Activated CD4-positive, alpha-beta memory T cell treated with anti-CD3 and anti-CD28 coated beads for 36 hours (primary cell): ENCODE measurements at regions of chr1 and their contacts with region 1.

Region 1: GRCh38 chr1:9128520-9129265 is at the start of gene GPR157:
- DNase-seq: peak; percentile 86
- H3K4me3 Mint-ChIP-seq: peak within 1 kb of the TSS; percentile 86
- H3K27ac Mint-ChIP-seq: peak within 1 kb of the TSS; percentile 28
- H3K4me1 Mint-ChIP-seq: peaks cover 45% of the 10 kb centered on the region
- H3K27me3 Mint-ChIP-seq: no peaks in the 10 kb centered on the region
- total RNA-seq, gene GPR157: 3.5 to 3.9 TPM

Region 2: GRCh38 chr1:8817406-8818324 is 311.0 kb before region 1 on chr1 and contains the start of gene RERE:
- CTCF ChIA-PET with region 1: no interaction called
- POLR2A ChIA-PET with region 1: no interaction called
- intact Hi-C with region 1: loop called (anchors 5 kb)
- DNase-seq: peak; percentile 97
- H3K4me3 Mint-ChIP-seq: peak within 1 kb of the TSS; percentile 86
- H3K27ac Mint-ChIP-seq: peak within 1 kb of the TSS; percentile 91
- H3K4me1 Mint-ChIP-seq: peaks cover 46% of the 10 kb centered on the region
- H3K27me3 Mint-ChIP-seq: peaks cover 4% of the 10 kb centered on the region
- total RNA-seq, gene RERE: 45.0 to 50.5 TPM

Region 3: DNA sequence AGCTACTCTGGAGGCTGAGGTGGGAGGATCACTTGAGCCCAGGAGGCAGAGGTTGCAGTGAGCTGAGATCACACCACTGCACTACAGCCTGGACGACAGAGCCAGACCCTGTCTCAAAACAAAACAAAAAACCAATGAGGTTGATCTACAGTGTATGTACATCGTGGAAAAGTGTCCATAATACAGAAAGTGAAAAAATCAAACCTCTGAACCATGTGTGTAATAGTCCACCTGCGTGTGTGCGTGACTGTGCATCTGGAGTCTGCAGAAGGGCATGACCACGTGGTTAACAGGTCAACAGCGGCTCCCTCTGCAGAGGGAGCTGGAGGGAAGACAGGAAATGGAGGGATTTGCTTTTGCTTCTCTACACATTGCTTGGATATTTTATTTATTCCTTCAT is 217.8 kb before region 1 on chr1:
- CTCF ChIA-PET with region 1: no interaction called
- POLR2A ChIA-PET with region 1: no interaction called
- intact Hi-C with region 1: no loop called
- DNase-seq: no peak
- H3K4me3 Mint-ChIP-seq: no peak overlapping the region
- H3K27ac Mint-ChIP-seq: no peak overlapping the region
- H3K4me1 Mint-ChIP-seq: peaks cover 3% of the 10 kb centered on the region
- H3K27me3 Mint-ChIP-seq: peaks cover 3% of the 10 kb centered on the region

Region 4: DNA sequence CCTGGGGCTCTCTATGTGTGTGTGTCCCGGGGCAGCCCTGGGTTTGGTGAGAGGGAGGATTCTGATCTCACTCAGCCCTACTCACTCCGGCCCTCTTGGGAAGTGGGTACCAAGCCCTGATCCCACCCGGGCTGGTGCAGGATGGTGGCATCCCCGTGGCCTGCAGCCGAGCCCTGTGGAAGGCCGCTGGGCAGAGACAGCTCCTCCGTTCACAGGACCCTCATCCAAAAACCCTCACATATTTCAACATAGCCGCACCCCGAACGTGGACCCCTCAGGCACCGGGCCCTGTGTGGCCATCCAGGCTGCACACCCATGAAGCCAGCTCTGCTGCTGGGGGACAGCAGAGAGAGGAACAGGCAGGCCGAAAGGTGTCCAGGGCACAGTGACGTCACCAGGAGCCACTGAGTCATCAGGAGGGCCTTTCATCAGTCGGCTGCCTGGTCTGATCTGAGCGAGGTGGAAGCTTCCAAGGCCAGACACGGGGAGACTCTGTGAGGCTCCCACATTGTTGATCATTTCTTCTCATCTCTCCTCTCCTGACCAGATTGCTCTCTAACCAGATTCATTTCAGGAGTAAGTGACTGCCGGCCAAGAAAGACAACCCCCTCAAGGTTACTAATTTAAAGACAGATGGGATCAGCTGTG is 16.5 kb after region 1 on chr1:
- CTCF ChIA-PET with region 1: interaction called, 11 read pairs
- POLR2A ChIA-PET with region 1: no interaction called
- intact Hi-C with region 1: no loop called
- DNase-seq: peak; percentile 68
- H3K4me3 Mint-ChIP-seq: no peak overlapping the region
- H3K27ac Mint-ChIP-seq: no peak overlapping the region
- H3K4me1 Mint-ChIP-seq: peaks cover 4% of the 10 kb centered on the region
- H3K27me3 Mint-ChIP-seq: no peaks in the 10 kb centered on the region

Region 5: DNA sequence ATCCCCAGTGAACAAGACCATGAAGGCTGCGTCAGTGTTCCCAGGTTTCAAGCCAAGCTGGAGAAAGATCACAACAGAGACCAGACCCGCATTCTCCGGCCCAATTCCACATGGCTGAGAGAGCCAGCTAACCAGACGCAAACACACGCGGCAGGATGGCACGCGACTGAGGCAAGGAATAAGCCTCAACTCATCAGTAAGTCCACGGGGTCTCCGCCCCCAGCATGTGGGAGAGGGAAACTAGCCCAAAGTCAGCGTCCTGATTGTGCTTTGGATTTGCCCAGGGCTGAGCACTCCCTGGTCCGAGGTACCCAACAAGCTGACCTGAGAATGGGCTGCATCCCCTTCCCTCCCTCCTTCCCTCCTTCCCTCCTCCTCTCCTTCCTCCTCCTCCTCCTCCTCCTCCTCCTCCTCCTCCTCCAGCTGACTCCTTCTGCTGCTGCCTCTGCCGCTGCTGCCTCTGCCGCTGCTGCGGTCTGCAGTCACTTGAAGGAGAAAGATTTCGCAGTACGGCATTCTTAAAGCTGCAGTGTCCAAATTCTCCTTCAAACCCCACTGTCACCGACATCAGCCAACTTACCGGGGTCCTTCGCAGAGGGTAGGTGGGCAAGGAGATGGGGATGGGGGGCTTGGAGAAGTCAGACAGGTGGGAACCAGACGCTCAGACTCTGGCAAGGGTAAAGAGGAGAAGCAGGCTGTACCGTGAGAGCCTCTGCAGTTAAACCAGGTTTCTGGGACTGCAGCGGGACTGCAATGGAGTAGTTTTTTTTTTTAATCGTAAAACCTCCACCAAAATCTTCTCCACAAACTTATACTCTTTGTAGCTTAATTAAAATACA is 72.9 kb after region 1 on chr1:
- CTCF ChIA-PET with region 1: no interaction called
- POLR2A ChIA-PET with region 1: no interaction called
- intact Hi-C with region 1: loop called (anchors 5 kb)
- DNase-seq: no peak
- H3K4me3 Mint-ChIP-seq: no peak overlapping the region
- H3K27ac Mint-ChIP-seq: no peak overlapping the region
- H3K4me1 Mint-ChIP-seq: peaks cover 34% of the 10 kb centered on the region
- H3K27me3 Mint-ChIP-seq: peaks cover 83% of the 10 kb centered on the region

Region 6: GRCh38 chr1:9388335-9389180 is 259.9 kb after region 1 on chr1:
- CTCF ChIA-PET with region 1: no interaction called
- POLR2A ChIA-PET with region 1: no interaction called
- intact Hi-C with region 1: no loop called
- DNase-seq: no peak
- H3K4me3 Mint-ChIP-seq: no peak overlapping the region
- H3K27ac Mint-ChIP-seq: no peak overlapping the region
- H3K4me1 Mint-ChIP-seq: peaks cover 15% of the 10 kb centered on the region
- H3K27me3 Mint-ChIP-seq: no peaks in the 10 kb centered on the region

Region 7: DNA sequence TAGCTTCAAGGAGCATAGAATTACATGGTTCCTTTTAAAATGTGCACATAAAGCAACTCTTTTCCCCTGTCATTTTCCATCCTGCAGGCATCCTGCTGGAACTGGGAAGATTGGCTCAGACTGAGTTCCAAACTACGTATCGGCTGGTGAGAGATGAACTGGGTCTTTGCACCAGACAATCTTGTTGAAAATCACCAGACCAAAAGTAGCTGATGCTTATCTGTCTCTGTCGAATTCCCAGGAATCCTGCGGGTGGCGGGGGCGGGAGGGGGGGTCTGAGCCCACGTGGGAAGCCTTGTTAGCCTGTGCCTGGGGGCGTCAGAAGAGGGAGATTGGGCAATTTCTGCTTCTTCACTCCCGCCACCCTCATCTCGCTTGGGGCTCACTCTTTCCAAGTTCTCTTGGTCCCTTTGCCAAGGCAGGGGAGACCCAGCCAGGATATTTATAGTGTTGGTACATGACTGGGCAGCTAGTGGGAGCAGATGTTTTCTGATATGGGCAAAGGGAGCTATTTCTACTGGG is 320.5 kb after region 1 on chr1:
- CTCF ChIA-PET with region 1: no interaction called
- POLR2A ChIA-PET with region 1: no interaction called
- intact Hi-C with region 1: no loop called
- DNase-seq: no peak
- H3K4me3 Mint-ChIP-seq: no peak overlapping the region
- H3K27ac Mint-ChIP-seq: no peak overlapping the region
- H3K4me1 Mint-ChIP-seq: no peaks in the 10 kb centered on the region
- H3K27me3 Mint-ChIP-seq: no peaks in the 10 kb centered on the region

Region 8: DNA sequence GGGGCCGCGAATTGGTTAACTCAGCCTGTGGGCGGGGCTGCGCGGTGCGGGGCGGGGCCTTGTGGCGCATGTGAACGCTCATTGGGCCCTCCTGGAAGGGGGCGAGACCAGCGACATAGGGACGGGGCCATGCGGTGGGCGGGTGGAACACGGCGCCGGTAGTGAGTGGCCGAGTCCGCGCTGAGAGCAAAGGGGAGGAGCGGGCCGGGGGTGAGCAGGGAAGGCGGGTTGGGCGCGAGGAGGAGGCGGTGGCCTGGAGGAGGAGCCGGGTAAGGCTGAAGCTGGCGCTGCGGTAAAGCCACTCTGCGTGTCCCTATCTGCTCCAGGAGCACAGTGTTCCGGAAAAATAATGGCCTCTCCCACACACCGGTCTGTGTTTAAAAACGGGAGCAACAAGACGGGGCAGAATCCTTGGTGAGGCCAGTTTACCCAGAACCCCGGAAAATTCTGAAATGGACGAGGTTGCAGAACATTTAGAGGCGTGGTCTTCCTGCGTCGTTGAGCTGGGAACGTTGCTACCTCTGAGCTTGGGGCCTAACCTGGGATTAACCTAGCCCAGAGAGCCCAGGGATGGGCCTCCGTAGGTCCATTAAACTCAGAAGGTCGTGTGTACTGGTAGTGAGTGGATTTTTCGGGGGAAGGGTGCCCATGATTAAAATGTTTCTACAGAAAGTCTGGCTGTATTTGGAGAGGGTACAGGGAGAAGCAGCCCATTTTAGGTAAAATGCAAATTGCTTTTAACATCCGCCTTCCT is 781.9 kb after region 1 on chr1:
- CTCF ChIA-PET with region 1: no interaction called
- POLR2A ChIA-PET with region 1: no interaction called
- intact Hi-C with region 1: loop called (anchors 10 kb)
- DNase-seq: peak; percentile 100
- H3K4me3 Mint-ChIP-seq: peak overlapping the region; percentile 94
- H3K27ac Mint-ChIP-seq: peak overlapping the region; percentile 94
- H3K4me1 Mint-ChIP-seq: peaks cover 28% of the 10 kb centered on the region
- H3K27me3 Mint-ChIP-seq: no peaks in the 10 kb centered on the region